Endothelial cell of umbilical vein (primary cell): ENCODE measurements at regions of chr21 and their contacts with region 1.

Region 1: GRCh38 chr21:34202553-34203372 is 129.4 kb downstream of the MRPS6 start:
- DNase-seq: no peak
- H3K4me3 ChIP-seq: peak overlapping the region in 1 of 3 experiments; percentile 46
- H3K27ac ChIP-seq: no peak overlapping the region
- H3K4me1 ChIP-seq: peaks cover 6% of the 10 kb centered on the region
- H3K27me3 ChIP-seq: peaks cover 0 to 7% of the 10 kb centered on the region in 2 experiments
- CTCF ChIP-seq: no peak
- POLR2A ChIP-seq: no peak

Region 2: GRCh38 chr21:33947451-33948095 is 255.2 kb before region 1 on chr21:
- CTCF ChIA-PET with region 1: interaction called, 10 read pairs
- POLR2A ChIA-PET with region 1: no interaction called
- dilution Hi-C with region 1: no loop called
- intact Hi-C with region 1: no loop called
- DNase-seq: peak; percentile 95
- H3K4me3 ChIP-seq: peak overlapping the region in 1 of 3 experiments; percentile 43
- H3K27ac ChIP-seq: peak overlapping the region; percentile 80
- H3K4me1 ChIP-seq: peaks cover 19% of the 10 kb centered on the region
- H3K27me3 ChIP-seq: no peaks in the 10 kb centered on the region
- CTCF ChIP-seq: no peak
- POLR2A ChIP-seq: no peak

Region 3: GRCh38 chr21:34129039-34129891 is 73.5 kb before region 1 on chr21:
- CTCF ChIA-PET with region 1: interaction called, 10 read pairs
- POLR2A ChIA-PET with region 1: no interaction called
- dilution Hi-C with region 1: no loop called
- intact Hi-C with region 1: no loop called
- DNase-seq: peak; percentile 79
- H3K4me3 ChIP-seq: no peak overlapping the region
- H3K27ac ChIP-seq: no peak overlapping the region
- H3K4me1 ChIP-seq: peaks cover 6% of the 10 kb centered on the region
- H3K27me3 ChIP-seq: no peaks in the 10 kb centered on the region
- CTCF ChIP-seq: peak in 1 of 2 donors; percentile 49
- POLR2A ChIP-seq: no peak

Region 4: GRCh38 chr21:34143685-34144182 is 59.0 kb before region 1 on chr21:
- CTCF ChIA-PET with region 1: no interaction called
- POLR2A ChIA-PET with region 1: no interaction called
- dilution Hi-C with region 1: no loop called
- intact Hi-C with region 1: no loop called
- DNase-seq: no peak
- H3K4me3 ChIP-seq: no peak overlapping the region
- H3K27ac ChIP-seq: no peak overlapping the region
- H3K4me1 ChIP-seq: peaks cover 4% of the 10 kb centered on the region
- H3K27me3 ChIP-seq: no peaks in the 10 kb centered on the region
- CTCF ChIP-seq: no peak
- POLR2A ChIP-seq: no peak